ENCODE measurements at regions of chr14 and their contacts with region 1.

Region 1: DNA sequence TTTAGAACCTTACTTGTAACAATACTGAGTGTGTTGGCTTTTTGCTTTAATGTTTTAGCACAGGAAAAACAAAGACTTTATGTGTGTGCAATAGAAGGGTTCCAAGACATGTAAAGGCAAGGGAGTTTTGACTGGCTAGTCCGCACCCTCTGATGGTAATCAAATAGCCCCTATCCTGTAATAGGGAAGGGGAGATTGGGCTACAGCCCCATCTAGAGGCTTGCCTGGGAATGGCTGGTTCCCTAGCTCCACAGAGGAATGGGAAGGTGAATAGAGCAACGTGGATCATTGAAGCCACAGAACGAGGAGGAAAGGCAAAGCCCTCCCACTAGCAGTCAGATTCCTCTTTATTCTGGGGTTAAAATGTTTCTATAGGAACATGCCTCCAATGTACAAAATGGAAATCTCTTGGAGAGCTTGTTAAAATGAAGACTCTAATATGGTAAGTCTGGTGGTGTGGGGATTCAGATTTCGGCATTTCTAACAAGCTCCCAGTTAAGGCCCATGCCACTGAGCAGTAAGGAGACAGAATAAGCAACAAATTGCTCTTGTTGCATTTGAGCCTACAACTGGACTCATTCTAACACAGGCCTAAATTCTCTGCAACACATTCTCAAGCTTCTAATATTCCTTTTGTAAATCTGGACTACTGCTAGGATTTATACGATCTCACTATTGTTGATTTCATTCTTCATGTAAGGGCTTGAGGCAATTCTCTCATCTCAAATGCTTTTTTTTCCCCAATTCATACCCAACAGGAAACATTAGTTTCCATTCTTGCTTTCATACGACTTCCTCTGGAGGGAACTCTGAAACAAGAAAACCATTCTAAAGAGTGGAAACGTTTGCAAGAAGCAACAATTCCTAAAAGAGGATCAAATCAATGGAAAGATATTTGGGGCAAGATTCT is 57.1 kb downstream of the NIN start:
- DNase-seq: no peak
- H3K4me3 ChIP-seq: no peak overlapping the region
- H3K4me3 Mint-ChIP-seq: peak overlapping the region in 1 of 8 donors; percentile 33
- H3K27ac ChIP-seq: no peak overlapping the region
- H3K27ac Mint-ChIP-seq: peak overlapping the region in 6 of 7 donors; percentile 25 to 87 (median 59)
- H3K4me1 ChIP-seq: peaks cover 13% of the 10 kb centered on the region
- H3K4me1 Mint-ChIP-seq: peaks cover 15 to 31% (median 20%) of the 10 kb centered on the region in 4 donors
- H3K27me3 ChIP-seq: no peaks in the 10 kb centered on the region
- H3K27me3 Mint-ChIP-seq: no peaks in the 10 kb centered on the region

Region 2: GRCh38 chr14:50542941-50543418 is 230.9 kb before region 1 on chr14:
- CTCF ChIA-PET with region 1: interaction called, 37 read pairs
- POLR2A ChIA-PET with region 1: interaction called, 3 read pairs
- intact Hi-C with region 1: loop called (anchors 1 kb)
- DNase-seq: peak; percentile 43 to 52 (median 49)
- H3K4me3 ChIP-seq: no peak overlapping the region
- H3K4me3 Mint-ChIP-seq: no peak overlapping the region
- H3K27ac ChIP-seq: no peak overlapping the region
- H3K27ac Mint-ChIP-seq: no peak overlapping the region
- H3K4me1 ChIP-seq: peaks cover 7% of the 10 kb centered on the region
- H3K4me1 Mint-ChIP-seq: peaks cover 9 to 15% (median 12%) of the 10 kb centered on the region in 4 donors
- H3K27me3 ChIP-seq: no peaks in the 10 kb centered on the region
- H3K27me3 Mint-ChIP-seq: peaks cover 2 to 8% of the 10 kb centered on the region in 2 donors

Region 3: DNA sequence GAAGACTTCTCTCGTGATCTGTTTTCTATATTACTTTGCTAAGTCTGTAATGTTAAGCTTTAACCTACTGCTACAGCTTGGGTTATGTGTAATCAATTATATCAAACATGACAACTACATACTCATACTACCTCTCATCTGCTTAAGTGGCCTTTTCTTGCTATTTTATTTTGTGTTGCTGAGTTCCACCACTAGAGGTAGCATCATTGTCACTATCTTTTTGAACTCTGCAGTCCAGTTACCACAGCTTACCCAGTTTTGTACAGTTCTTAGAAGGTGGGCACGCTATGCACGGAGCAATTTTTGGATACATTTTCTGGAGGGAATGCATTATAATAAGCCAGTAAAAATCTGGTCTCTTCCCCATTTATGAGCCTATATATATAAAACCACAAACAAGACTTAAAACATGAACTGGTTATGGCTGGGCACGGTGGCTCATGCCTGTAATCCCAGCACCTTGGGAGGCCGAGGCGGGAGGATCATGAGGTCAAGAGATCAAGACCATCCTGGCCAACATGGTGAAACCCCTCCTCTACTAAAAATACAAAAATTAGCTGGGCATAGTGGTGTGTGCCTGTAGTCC is 154.2 kb before region 1 on chr14:
- CTCF ChIA-PET with region 1: interaction called, 19 read pairs
- POLR2A ChIA-PET with region 1: no interaction called
- intact Hi-C with region 1: loop called (anchors 1 kb)
- DNase-seq: peak in 3 of 5 donors; percentile 9 to 16 (median 12)
- H3K4me3 ChIP-seq: no peak overlapping the region
- H3K4me3 Mint-ChIP-seq: no peak overlapping the region
- H3K27ac ChIP-seq: no peak overlapping the region
- H3K27ac Mint-ChIP-seq: peak overlapping the region in 1 of 7 donors; percentile 44
- H3K4me1 ChIP-seq: no peaks in the 10 kb centered on the region
- H3K4me1 Mint-ChIP-seq: no peaks in the 10 kb centered on the region
- H3K27me3 ChIP-seq: no peaks in the 10 kb centered on the region
- H3K27me3 Mint-ChIP-seq: no peaks in the 10 kb centered on the region

Region 4: DNA sequence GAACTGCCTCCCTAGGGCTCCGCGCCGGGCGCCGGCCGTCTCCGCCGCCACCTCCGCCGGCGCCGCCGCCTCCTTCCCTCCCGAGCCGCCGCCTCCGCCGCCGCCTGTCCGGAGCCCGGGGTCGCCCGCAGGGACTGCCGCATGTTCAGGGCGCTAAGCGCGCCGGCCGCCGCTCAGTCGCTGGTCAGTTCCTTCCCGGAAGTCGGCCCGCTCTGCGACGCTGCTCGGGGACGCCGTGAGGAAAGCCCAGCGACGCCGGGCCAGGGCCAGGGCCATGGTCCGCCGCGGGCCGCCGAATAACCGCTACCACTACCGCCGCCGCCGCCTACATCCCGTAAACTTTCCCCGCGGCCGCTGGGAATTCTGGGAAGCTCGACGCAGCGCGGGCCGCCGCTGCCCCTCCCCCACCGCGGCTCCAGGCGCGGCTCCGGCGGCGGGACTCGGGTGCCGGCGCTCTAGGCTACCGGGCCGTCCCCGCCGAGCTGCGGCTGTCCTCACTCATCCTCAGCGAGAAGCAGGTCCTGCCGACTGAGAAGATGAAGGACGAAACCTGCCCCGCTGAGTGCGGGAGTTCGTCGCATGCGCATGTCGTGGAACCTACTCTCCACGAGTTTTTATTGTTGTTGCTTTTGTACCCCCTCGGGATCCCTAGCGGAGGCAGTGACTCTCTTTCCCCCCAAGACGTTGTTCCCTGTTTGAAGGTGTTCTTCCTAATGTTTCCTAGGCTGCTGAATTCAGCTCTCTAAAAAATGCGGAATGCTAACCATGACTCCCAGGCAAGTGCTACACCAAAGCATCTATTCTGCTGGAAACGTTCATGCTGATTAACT is 105.7 kb before region 1 on chr14 and contains the start of gene SAV1:
- CTCF ChIA-PET with region 1: no interaction called
- POLR2A ChIA-PET with region 1: no interaction called
- intact Hi-C with region 1: no loop called
- DNase-seq: peak; percentile 41 to 50 (median 45)
- H3K4me3 ChIP-seq: peak within 1 kb of the TSS; percentile 48 to 70
- H3K4me3 Mint-ChIP-seq: peak within 1 kb of the TSS in 2 of 8 donors; percentile 94 to 96
- H3K27ac ChIP-seq: peak within 1 kb of the TSS; percentile 52
- H3K27ac Mint-ChIP-seq: peak within 1 kb of the TSS in 6 of 7 donors; percentile 89 to 95 (median 92)
- H3K4me1 ChIP-seq: peaks cover 19% of the 10 kb centered on the region
- H3K4me1 Mint-ChIP-seq: peaks cover 14 to 20% (median 20%) of the 10 kb centered on the region in 4 donors
- H3K27me3 ChIP-seq: no peaks in the 10 kb centered on the region
- H3K27me3 Mint-ChIP-seq: no peaks in the 10 kb centered on the region
- total RNA-seq, gene SAV1: 13.9 to 14.5 TPM

Region 5: GRCh38 chr14:50762001-50762930 is 11.6 kb before region 1 on chr14:
- CTCF ChIA-PET with region 1: interaction called, 66 read pairs
- POLR2A ChIA-PET with region 1: no interaction called
- intact Hi-C with region 1: no loop called
- DNase-seq: no peak
- H3K4me3 ChIP-seq: no peak overlapping the region
- H3K4me3 Mint-ChIP-seq: no peak overlapping the region
- H3K27ac ChIP-seq: no peak overlapping the region
- H3K27ac Mint-ChIP-seq: peak overlapping the region in 1 of 7 donors; percentile 69
- H3K4me1 ChIP-seq: no peaks in the 10 kb centered on the region
- H3K4me1 Mint-ChIP-seq: peaks cover 0 to 4% (median 2%) of the 10 kb centered on the region in 4 donors
- H3K27me3 ChIP-seq: no peaks in the 10 kb centered on the region
- H3K27me3 Mint-ChIP-seq: no peaks in the 10 kb centered on the region

Region 6: GRCh38 chr14:50871914-50872732 is 98.2 kb after region 1 on chr14 and contains the start of gene ABHD12B:
- CTCF ChIA-PET with region 1: interaction called, 11 read pairs
- POLR2A ChIA-PET with region 1: no interaction called
- intact Hi-C with region 1: no loop called
- DNase-seq: no peak
- H3K4me3 ChIP-seq: no peak within 1 kb of the TSS
- H3K4me3 Mint-ChIP-seq: peak within 1 kb of the TSS in 7 of 8 donors; percentile 4 to 64 (median 32)
- H3K27ac ChIP-seq: no peak within 1 kb of the TSS
- H3K27ac Mint-ChIP-seq: no peak within 1 kb of the TSS
- H3K4me1 ChIP-seq: peaks cover 21% of the 10 kb centered on the region
- H3K4me1 Mint-ChIP-seq: peaks cover 21 to 41% (median 26%) of the 10 kb centered on the region in 4 donors
- H3K27me3 ChIP-seq: peaks cover 38% of the 10 kb centered on the region
- H3K27me3 Mint-ChIP-seq: peaks cover 48 to 63% of the 10 kb centered on the region in 2 donors
- total RNA-seq, gene ABHD12B: not detected